Stomach (tissue), 19 donors: ENCODE measurements at regions of chr16 and their contacts with region 1.

Region 1: DNA sequence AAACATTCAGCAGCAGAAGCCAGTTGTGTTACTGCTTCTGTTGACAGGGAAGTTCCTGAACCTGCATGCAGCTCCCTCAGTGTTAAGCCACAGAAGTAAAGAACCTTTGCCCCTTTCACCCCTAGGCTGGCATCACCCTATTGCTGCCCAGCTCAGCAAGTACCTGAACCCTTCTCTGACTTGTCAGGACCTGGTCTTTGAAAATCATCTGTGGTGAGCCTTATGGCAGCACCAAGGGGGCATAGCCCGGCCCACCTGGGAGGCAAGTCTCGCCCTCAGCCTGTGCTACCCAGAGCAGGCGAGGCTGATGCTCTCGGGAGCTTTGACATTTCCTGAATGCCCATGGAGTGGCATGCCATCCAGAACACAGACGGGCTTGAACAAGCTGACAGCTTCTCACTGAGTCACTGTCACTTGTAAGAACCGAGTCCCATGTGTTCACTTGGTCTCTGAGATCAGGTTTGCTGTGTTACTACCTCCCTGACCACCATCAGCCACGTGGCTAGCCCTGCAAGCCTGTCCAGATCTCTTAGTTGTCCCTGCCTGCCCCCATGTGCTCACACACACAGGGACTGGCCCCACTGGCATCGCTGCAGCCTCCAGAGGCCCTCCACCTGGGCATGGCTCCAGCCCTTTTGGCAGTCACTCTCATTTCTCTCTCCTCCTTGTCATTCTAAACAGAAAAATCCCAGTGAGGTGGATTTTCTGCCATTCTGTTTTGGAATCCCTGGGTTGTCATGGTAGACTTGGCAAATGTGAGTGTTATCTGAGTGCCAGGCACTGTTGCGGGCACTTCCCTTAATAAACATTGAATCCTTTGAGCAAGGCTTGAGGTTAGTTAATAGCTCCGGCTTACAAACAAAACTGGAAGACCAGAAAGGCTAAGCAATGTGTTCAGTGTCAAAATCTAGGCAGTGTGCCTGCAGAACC is 2.9 kb upstream of the CARMIL2 start:
- DNase-seq: peak; percentile 59 to 75
- H3K4me3 ChIP-seq: no peak overlapping the region
- H3K27ac ChIP-seq: peak overlapping the region in 4 of 5 donors; percentile 5 to 41 (median 24)
- H3K4me1 ChIP-seq: peaks cover 8 to 39% (median 26%) of the 10 kb centered on the region in 4 donors
- H3K27me3 ChIP-seq: peaks cover 3 to 33% (median 25%) of the 10 kb centered on the region in 3 donors
- CTCF ChIP-seq: no peak
- EP300 ChIP-seq: no peak
- POLR2A ChIP-seq: no peak

Region 2: DNA sequence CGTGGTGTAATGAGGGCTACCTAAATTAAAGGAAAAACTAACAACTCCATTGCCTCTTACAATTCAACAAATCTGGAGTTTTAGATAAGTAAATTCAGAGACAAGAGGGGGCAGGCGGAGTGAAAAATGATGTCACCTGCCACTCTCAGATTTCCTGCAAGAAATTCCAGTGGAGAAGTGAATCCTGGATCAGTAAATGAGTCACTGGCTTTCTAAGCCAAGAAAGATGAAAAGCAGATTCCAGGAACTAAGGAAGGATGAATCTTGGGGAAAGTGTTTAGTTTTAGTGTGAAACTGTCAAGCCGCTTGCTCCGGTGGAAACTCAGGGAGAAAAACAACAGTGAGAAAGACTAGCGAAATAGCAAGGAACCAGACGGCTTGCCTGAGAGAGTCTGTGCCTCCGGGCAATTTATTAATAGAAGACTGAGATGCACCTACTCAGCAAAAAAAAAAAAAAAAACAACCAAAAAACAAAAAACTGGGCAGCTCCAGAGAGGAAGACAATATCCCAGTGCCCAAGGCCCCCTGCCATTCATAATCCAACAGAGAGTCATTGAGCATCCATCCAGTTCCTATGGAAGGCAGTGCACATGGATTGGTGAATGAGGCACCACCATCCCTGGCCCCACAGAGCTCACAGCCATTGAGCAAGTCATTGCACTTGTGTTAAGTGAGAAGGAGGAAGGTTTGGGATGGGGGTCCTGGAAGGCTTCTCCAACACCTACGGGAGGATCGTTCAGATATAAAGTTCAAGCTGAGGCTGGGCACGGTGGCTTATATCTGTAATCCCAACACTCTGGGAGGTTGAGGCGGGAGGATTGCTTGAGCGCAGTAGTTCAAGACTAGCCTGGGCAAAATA is 125.5 kb before region 1 on chr16:
- intact Hi-C with region 1: loop called (anchors 5 kb)
- DNase-seq: no peak
- H3K4me3 ChIP-seq: no peak overlapping the region
- H3K27ac ChIP-seq: no peak overlapping the region
- H3K4me1 ChIP-seq: peaks cover 0 to 19% (median 9%) of the 10 kb centered on the region in 4 donors
- H3K27me3 ChIP-seq: no peaks in the 10 kb centered on the region
- CTCF ChIP-seq: no peak
- EP300 ChIP-seq: no peak
- POLR2A ChIP-seq: no peak

Region 3: DNA sequence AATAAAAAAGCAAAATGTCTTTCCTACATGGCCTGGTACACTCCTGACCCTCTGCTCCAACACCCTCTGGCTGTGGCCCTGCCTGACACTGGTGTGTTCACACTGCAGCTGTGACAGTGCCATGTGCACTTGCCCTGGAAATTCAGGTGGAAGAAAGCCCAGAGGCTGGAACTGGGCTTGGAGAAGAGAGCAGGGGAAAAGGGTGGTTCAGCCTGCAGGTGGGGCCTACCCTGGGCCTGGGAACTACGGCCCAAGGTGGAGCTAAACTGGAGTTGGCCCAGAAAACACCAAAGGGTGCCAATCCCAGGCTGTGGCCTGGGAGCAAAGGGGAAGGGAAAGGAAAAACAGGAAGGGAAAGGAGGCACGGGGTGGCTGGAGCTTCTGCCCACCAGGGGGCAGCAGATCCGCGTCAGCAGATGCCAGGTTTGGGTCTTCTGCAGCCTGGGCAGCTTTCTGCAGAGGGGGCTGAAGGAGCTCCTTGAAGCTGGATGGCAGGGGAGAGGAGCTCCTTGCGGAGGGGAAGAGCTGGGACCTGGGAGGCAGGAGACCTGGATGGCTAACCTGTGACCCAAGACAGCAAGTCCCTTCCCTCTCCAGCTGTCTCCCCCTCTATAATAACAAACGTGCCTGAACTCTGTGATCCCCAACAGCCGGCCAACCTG is 95.2 kb before region 1 on chr16:
- intact Hi-C with region 1: loop called (anchors 5 kb)
- DNase-seq: peak; percentile 88 to 90
- H3K4me3 ChIP-seq: peak overlapping the region in 1 of 4 donors; percentile 4
- H3K27ac ChIP-seq: peak overlapping the region; percentile 0 to 67 (median 54)
- H3K4me1 ChIP-seq: peaks cover 15 to 48% (median 28%) of the 10 kb centered on the region in 4 donors
- H3K27me3 ChIP-seq: no peaks in the 10 kb centered on the region
- CTCF ChIP-seq: peak in 5 of 7 experiments; percentile 89 to 98 (median 96)
- EP300 ChIP-seq: no peak
- POLR2A ChIP-seq: no peak